Activated T-helper 1 cell treated with anti-CD3 and anti-CD28 coated beads, Interleukin-12 subunit alpha, Interleukin-12 subunit beta, Interleukin-2, Interleukin-4 antibody, amounts not matched to agents 30 ng/mL and 10 ng/mL and 1 ng/mL, durations not matched to agents 14 hours and 24 hours and 36 hours (primary cell): ENCODE measurements at regions of chr3 and their contacts with region 1.

Region 1: DNA sequence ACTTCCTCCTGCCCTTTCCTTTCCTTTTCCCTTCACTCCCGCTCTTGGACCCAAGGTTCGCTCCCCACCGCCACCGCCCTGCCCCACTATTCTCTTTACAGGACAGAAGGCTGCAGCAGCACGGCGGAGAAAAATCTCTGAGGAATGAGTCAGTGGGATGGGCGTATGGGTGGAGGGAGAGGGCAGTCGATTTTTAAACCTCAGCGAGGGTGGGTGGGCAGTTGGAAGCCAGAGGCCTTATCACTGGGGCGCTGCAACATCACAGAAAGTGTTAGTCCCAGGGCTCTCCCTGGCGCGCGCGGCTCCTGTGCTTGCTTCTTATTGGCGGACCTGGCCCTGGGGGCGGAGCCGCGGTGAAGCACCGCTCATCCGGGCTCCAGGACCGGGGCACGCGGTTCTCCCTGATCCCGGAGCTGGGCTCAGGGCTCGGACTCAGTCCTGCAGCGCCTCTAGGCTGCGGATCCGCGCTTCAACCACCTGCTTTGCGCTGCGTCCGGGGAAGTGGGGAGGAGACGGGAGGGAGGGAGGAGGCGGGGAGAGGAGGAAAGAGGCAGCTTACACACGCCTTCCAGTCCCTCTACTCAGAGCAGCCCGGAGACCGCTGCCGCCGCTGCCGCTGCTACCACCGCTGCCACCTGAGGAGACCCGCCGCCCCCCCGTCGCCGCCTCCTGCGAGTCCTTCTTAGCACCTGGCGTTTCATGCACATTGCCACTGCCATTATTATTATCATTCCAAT is at the start of gene ALCAM:
- DNase-seq: peak; percentile 80
- H3K4me3 Mint-ChIP-seq: peak within 1 kb of the TSS; percentile 90
- H3K27ac Mint-ChIP-seq: peak within 1 kb of the TSS; percentile 98
- H3K4me1 Mint-ChIP-seq: peaks cover 43% of the 10 kb centered on the region
- H3K27me3 Mint-ChIP-seq: peaks cover 22% of the 10 kb centered on the region
- total RNA-seq, gene ALCAM: 24.9 and 25.2 TPM in 2 replicates

Region 2: DNA sequence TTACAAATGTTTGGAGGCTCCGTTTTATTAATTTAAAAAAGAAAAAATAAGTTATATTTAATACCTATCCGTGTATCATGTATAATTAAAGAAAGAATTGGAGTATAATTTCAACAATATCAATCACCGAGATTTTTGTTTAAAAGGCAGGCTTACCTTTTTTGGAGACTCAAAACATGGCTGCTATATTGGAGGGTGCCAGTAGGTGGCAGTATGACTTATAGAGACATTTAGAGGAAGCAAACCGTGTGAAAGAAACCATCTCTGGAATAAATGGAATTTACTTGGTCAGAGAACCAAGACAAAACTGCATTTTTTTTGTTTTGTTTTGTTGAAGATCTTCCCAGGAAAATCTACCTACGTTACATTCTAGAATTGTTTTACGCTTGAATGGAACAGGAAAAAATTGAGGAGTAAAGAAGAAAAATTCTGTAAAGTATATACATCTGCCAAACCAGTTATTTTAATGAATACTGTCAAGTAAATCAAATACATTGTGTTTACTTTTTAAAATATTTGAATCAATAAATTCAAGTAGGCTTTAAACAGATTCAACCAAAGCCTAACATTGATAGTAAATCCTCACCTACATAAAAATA is 802.4 kb before region 1 on chr3:
- intact Hi-C with region 1: loop called (anchors 1 kb)
- DNase-seq: peak; percentile 24
- H3K4me3 Mint-ChIP-seq: no peak overlapping the region
- H3K27ac Mint-ChIP-seq: no peak overlapping the region
- H3K4me1 Mint-ChIP-seq: no peaks in the 10 kb centered on the region
- H3K27me3 Mint-ChIP-seq: no peaks in the 10 kb centered on the region

Region 3: DNA sequence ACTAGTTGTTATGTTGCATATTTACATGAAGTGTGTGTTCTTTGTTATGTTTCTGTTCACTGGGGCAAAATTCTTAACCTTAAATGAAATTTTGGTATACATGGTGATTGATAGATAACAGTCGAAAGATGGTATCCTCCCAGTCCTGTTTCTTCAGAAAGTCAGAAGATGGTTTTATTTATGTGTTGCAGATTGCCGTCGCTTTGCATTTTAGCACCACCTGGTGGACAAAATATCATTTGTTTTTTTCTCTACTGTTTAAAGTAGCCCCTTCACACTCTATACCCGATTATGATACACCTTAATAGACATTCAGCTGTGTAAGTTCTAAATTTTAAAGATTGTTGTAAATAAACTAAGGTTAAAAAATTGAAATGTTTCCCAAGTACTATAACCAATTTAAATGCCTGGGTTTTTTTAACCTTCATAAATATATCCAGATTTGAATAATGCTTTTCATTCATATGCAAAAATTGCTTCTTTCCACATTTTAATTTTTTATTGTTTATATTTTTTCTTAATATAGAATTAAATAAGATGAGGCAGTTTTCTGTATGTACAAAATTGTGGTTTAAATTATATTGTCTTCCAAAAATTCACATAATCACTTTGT is 152.4 kb after region 1 on chr3:
- intact Hi-C with region 1: loop called (anchors 2 kb)
- DNase-seq: peak; percentile 11
- H3K4me3 Mint-ChIP-seq: no peak overlapping the region
- H3K27ac Mint-ChIP-seq: no peak overlapping the region
- H3K4me1 Mint-ChIP-seq: no peaks in the 10 kb centered on the region
- H3K27me3 Mint-ChIP-seq: no peaks in the 10 kb centered on the region

Region 4: DNA sequence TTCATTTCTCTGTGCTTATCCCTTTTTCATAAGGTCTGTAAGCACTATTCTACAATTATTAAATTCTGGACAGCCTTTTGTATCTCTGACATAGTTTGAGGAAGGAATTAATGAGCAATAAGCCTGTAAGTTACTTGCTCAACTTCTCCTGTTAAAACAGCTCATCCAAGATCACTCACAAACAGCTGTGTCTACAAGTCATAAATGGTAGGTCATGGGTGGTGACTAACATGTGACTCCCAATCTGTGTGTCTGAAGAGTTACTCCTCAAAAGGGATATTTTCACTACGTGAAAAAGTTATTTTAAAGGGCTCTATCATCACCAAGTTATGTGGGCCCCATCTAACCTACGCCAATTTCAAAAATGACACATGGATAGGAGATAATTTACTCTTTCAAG is 647.5 kb after region 1 on chr3:
- intact Hi-C with region 1: loop called (anchors 1 kb)
- DNase-seq: no peak
- H3K4me3 Mint-ChIP-seq: no peak overlapping the region
- H3K27ac Mint-ChIP-seq: peak overlapping the region; percentile 5
- H3K4me1 Mint-ChIP-seq: peaks cover 65% of the 10 kb centered on the region
- H3K27me3 Mint-ChIP-seq: no peaks in the 10 kb centered on the region

Region 5: DNA sequence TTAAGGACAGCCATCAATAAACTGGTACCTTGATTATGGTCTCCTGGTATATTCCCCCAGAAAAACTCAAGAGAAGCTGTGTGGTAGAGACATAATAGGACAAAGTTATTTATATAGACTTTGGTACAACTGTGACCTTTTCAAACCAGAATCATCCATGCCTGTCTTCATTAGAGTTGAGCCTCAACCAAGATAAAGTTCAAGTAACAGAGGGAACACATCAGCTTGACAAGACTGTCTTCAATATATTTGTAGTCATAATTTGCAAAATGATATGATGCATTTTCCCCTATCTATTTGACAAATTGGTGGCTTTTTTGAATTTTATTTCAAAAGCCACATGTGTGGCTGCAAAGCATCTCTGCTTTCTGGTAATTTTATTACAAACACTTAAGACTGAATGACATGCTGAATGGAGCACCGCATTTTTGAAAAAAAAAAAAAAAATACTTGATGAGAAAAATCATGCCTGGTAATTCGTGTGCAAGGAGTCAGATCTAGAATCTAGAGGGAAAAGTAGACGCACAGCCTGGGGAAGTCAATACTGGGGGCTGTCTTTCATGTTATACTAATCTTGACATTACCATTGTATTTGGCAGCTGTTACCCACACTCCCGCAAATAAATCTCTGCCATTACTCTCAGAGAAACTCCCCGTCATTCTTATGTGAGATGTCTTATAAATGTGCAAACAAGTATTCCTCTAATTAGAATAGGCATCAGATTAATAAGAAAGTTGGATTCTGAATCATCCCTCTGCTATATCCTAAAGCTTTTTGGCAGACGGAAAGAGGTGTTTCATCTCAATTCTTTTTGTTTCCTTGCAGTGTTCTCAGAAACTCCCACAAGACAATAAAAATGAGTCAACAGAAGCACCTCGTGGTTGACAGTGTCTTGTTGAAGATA is 1057.1 kb after region 1 on chr3:
- intact Hi-C with region 1: loop called (anchors 1 kb)
- DNase-seq: no peak
- H3K4me3 Mint-ChIP-seq: peak overlapping the region; percentile 45
- H3K27ac Mint-ChIP-seq: peak overlapping the region; percentile 90
- H3K4me1 Mint-ChIP-seq: peaks cover 50% of the 10 kb centered on the region
- H3K27me3 Mint-ChIP-seq: no peaks in the 10 kb centered on the region

Region 6: DNA sequence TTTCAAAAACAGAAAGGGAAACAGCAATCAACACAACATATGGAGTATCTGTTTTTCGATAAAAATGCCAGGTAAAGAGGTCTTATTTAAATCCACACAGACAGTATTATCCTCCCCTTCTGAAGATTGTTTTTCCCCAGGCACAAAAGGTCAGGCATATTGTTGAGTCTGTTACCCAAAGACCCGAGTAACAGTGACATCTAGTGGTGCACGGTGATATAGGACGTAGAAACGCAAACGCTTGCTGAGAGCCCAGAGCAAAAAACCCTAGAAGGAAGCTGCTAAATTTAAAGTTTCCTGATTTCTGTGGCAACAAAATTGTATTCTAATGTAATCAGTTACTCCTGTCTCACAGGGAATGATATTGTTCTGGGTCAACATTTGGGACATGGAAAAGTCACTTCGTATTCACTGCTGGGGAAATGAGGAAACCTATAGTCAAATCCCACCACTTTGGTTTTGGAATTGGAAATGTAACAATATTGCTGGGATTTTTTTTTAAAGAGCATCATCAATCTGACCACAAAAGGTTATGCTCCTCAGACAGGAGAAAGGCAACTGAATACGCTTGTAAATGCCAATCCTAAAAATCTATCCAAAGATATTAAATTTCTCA is 1698.1 kb after region 1 on chr3:
- intact Hi-C with region 1: loop called (anchors 1 kb)
- DNase-seq: peak; percentile 29
- H3K4me3 Mint-ChIP-seq: no peak overlapping the region
- H3K27ac Mint-ChIP-seq: no peak overlapping the region
- H3K4me1 Mint-ChIP-seq: peaks cover 24% of the 10 kb centered on the region
- H3K27me3 Mint-ChIP-seq: peaks cover 5% of the 10 kb centered on the region